Gastrocnemius medialis (tissue), 4 donors: ENCODE measurements at regions of chr10 and their contacts with region 1.

Region 1: GRCh38 chr10:75235375-75236177 is at the start of gene COMTD1:
- DNase-seq: peak; percentile 94 to 96
- ATAC-seq: peak; percentile 62 to 70
- H3K4me3 ChIP-seq: peak within 1 kb of the TSS; percentile 85 to 94 (median 89)
- H3K27ac ChIP-seq: peak within 1 kb of the TSS; percentile 84 to 95 (median 92)
- H3K4me1 ChIP-seq: peaks cover 3 to 6% of the 10 kb centered on the region in 2 donors
- H3K27me3 ChIP-seq: no peaks in the 10 kb centered on the region
- CTCF ChIP-seq: peak; percentile 100
- POLR2A ChIP-seq: peak; percentile 33 to 47
- total RNA-seq, gene COMTD1: 15.6 to 64.4 (median 34.9) TPM

Region 2: GRCh38 chr10:74244097-74244685 is 991.4 kb before region 1 on chr10:
- in situ Hi-C with region 1: no loop called
- intact Hi-C with region 1: loop called (anchors 1 kb)
- DNase-seq: no peak
- ATAC-seq: no peak
- H3K4me3 ChIP-seq: no peak overlapping the region
- H3K27ac ChIP-seq: no peak overlapping the region
- H3K4me1 ChIP-seq: no peaks in the 10 kb centered on the region
- H3K27me3 ChIP-seq: no peaks in the 10 kb centered on the region
- CTCF ChIP-seq: peak; percentile 31 to 54 (median 45)
- POLR2A ChIP-seq: no peak

Region 3: GRCh38 chr10:74262856-74263255 is 972.7 kb before region 1 on chr10:
- in situ Hi-C with region 1: loop called (anchors 5 to 25 kb)
- intact Hi-C with region 1: loop called (anchors 1 kb)
- DNase-seq: no peak
- ATAC-seq: no peak
- H3K4me3 ChIP-seq: no peak overlapping the region
- H3K27ac ChIP-seq: no peak overlapping the region
- H3K4me1 ChIP-seq: no peaks in the 10 kb centered on the region
- H3K27me3 ChIP-seq: no peaks in the 10 kb centered on the region
- CTCF ChIP-seq: no peak
- POLR2A ChIP-seq: no peak

Region 4: GRCh38 chr10:75042292-75042974 is 193.1 kb before region 1 on chr10:
- in situ Hi-C with region 1: no loop called
- intact Hi-C with region 1: loop called (anchors 10 kb)
- DNase-seq: peak; percentile 47 to 81
- ATAC-seq: peak; percentile 88 to 93
- H3K4me3 ChIP-seq: no peak overlapping the region
- H3K27ac ChIP-seq: peak overlapping the region; percentile 57 to 85 (median 80)
- H3K4me1 ChIP-seq: peaks cover 37 to 47% of the 10 kb centered on the region in 2 donors
- H3K27me3 ChIP-seq: no peaks in the 10 kb centered on the region
- CTCF ChIP-seq: no peak
- POLR2A ChIP-seq: no peak

Region 5: DNA sequence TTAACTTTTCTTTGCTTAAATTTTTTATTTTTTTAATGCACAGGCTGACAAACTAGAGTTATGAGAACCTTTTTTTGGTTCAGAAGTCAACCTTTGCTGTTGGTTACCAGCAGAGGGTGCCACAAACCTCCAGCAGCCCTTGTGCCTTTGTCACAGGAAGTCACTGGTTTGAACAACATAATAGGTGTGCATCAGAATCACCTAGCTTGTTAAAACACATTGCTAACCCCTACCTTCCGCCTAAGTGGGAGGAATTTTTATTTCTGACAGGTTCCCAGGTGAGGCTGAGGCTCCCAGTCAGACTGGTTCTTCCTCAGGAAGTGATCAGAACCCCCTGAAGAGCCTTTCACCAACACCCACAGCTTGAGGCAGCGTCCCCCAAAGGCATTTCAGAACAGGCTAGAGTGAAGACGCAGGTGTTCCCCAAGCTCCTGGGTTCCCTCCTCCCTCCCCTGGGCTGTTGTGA is 47.6 kb before region 1 on chr10:
- in situ Hi-C with region 1: loop called in 1 of 4 experiments (anchors 5 kb)
- intact Hi-C with region 1: loop called (anchors 2 kb)
- DNase-seq: peak; percentile 24 to 53
- ATAC-seq: peak; percentile 32 to 68
- H3K4me3 ChIP-seq: no peak overlapping the region
- H3K27ac ChIP-seq: peak overlapping the region in 1 of 4 donors; percentile 5
- H3K4me1 ChIP-seq: peaks cover 3 to 5% of the 10 kb centered on the region in 2 donors
- H3K27me3 ChIP-seq: no peaks in the 10 kb centered on the region
- CTCF ChIP-seq: peak; percentile 52 to 64 (median 62)
- POLR2A ChIP-seq: no peak

Region 6: GRCh38 chr10:75294866-75295701 is 59.5 kb after region 1 on chr10:
- in situ Hi-C with region 1: no loop called
- intact Hi-C with region 1: loop called (anchors 2 kb)
- DNase-seq: peak; percentile 69 to 80
- ATAC-seq: peak; percentile 76 to 77
- H3K4me3 ChIP-seq: peak overlapping the region; percentile 58 to 76 (median 64)
- H3K27ac ChIP-seq: peak overlapping the region; percentile 87 to 92 (median 90)
- H3K4me1 ChIP-seq: peaks cover 21 to 22% of the 10 kb centered on the region in 2 donors
- H3K27me3 ChIP-seq: no peaks in the 10 kb centered on the region
- CTCF ChIP-seq: peak; percentile 29 to 60 (median 40)
- POLR2A ChIP-seq: peak; percentile 77 to 85